Calu3 (cell line): ENCODE measurements at regions of chr6 and their contacts with region 1.

Region 1: GRCh38 chr6:1686117-1687098 is 76.7 kb downstream of the FOXC1 start:
- DNase-seq: peak; percentile 42
- H3K4me3 Mint-ChIP-seq: no peak overlapping the region
- H3K27ac Mint-ChIP-seq: peak overlapping the region; percentile 44
- H3K4me1 Mint-ChIP-seq: peaks cover 46% of the 10 kb centered on the region
- H3K27me3 Mint-ChIP-seq: no peaks in the 10 kb centered on the region
- CTCF ChIP-seq: no peak

Region 2: DNA sequence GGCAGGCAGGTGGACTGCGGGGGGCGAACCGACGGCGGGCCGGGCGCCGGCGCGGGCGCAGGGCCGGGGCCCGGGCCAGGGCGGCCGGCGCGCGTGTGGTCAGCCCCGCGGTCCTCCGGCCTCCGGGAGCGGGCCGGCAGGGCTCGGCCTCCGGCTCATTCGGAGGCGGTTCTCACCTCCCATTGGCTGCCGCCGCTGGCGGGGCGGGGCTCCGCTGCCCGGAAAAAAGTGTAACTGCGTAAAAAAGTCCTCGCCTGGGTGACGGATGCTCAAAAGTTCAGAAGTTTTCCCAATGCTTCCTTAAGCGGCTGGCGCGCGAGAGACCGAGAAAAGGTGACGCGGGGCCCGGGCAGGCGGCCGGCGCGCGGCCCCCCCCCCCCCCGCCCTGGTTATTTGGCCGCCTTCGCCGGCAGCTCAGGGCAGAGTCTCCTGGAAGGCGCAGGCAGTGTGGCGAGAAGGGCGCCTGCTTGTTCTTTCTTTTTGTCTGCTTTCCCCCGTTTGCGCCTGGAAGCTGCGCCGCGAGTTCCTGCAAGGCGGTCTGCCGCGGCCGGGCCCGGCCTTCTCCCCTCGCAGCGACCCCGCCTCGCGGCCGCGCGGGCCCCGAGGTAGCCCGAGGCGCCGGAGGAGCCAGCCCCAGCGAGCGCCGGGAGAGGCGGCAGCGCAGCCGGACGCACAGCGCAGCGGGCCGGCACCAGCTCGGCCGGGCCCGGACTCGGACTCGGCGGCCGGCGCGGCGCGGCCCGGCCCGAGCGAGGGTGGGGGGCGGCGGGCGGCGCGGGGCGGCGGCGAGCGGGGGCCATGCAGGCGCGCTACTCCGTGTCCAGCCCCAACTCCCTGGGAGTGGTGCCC is 76.5 kb before region 1 on chr6 and contains the start of gene FOXC1:
- CTCF ChIA-PET with region 1: no interaction called
- intact Hi-C with region 1: loop called (anchors 5 kb)
- DNase-seq: peak; percentile 90
- H3K4me3 Mint-ChIP-seq: peak within 1 kb of the TSS; percentile 80
- H3K27ac Mint-ChIP-seq: peak within 1 kb of the TSS; percentile 50
- H3K4me1 Mint-ChIP-seq: peaks cover 8% of the 10 kb centered on the region
- H3K27me3 Mint-ChIP-seq: peaks cover 12% of the 10 kb centered on the region
- CTCF ChIP-seq: no peak
- total RNA-seq, gene FOXC1: 12.3 and 16.5 TPM in 2 replicates

Region 3: GRCh38 chr6:1641323-1641885 is 45.0 kb before region 1 on chr6:
- CTCF ChIA-PET with region 1: interaction called, 3 read pairs
- intact Hi-C with region 1: loop called (anchors 5 kb)
- DNase-seq: peak; percentile 80
- H3K4me3 Mint-ChIP-seq: peak overlapping the region; percentile 33
- H3K27ac Mint-ChIP-seq: peak overlapping the region; percentile 61
- H3K4me1 Mint-ChIP-seq: peaks cover 40% of the 10 kb centered on the region
- H3K27me3 Mint-ChIP-seq: no peaks in the 10 kb centered on the region
- CTCF ChIP-seq: no peak